ENCODE measurements at regions of chr21 and their contacts with region 1.

Region 1: GRCh38 chr21:32257962-32258785 is 20.7 kb downstream of the MIS18A start:
- DNase-seq: peak; percentile 82
- H3K4me3 ChIP-seq: no peak overlapping the region
- H3K27ac ChIP-seq: peak overlapping the region in 3 of 4 donors; percentile 34 to 73 (median 73)
- H3K4me1 ChIP-seq: peaks cover 0 to 40% (median 33%) of the 10 kb centered on the region in 4 donors
- H3K27me3 ChIP-seq: no peaks in the 10 kb centered on the region
- CTCF ChIP-seq: peak; percentile 65 to 86 (median 73)
- EP300 ChIP-seq: no peak
- POLR2A ChIP-seq: no peak

Region 2: DNA sequence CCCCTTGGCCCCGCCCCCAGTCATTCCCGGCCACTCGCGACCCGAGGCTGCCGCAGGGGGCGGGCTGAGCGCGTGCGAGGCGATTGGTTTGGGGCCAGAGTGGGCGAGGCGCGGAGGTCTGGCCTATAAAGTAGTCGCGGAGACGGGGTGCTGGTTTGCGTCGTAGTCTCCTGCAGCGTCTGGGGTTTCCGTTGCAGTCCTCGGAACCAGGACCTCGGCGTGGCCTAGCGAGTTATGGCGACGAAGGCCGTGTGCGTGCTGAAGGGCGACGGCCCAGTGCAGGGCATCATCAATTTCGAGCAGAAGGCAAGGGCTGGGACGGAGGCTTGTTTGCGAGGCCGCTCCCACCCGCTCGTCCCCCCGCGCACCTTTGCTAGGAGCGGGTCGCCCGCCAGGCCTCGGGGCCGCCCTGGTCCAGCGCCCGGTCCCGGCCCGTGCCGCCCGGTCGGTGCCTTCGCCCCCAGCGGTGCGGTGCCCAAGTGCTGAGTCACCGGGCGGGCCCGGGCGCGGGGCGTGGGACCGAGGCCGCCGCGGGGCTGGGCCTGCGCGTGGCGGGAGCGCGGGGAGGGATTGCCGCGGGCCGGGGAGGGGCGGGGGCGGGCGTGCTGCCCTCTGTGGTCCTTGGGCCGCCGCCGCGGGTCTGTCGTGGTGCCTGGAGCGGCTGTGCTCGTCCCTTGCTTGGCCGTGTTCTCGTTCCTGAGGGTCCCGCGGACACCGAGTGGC is 598.5 kb before region 1 on chr21 and contains the start of gene SOD1:
- intact Hi-C with region 1: loop called (anchors 10 kb)
- DNase-seq: peak; percentile 97
- H3K4me3 ChIP-seq: peak within 1 kb of the TSS; percentile 85 to 95 (median 90)
- H3K27ac ChIP-seq: peak within 1 kb of the TSS; percentile 93 to 96 (median 95)
- H3K4me1 ChIP-seq: peaks cover 0 to 42% (median 38%) of the 10 kb centered on the region in 4 donors
- H3K27me3 ChIP-seq: no peaks in the 10 kb centered on the region
- CTCF ChIP-seq: peak in 1 of 4 experiments; percentile 19
- EP300 ChIP-seq: no peak
- POLR2A ChIP-seq: peak; percentile 78 to 80
- total RNA-seq, gene SOD1: 169 to 279 (median 199) TPM

Region 3: DNA sequence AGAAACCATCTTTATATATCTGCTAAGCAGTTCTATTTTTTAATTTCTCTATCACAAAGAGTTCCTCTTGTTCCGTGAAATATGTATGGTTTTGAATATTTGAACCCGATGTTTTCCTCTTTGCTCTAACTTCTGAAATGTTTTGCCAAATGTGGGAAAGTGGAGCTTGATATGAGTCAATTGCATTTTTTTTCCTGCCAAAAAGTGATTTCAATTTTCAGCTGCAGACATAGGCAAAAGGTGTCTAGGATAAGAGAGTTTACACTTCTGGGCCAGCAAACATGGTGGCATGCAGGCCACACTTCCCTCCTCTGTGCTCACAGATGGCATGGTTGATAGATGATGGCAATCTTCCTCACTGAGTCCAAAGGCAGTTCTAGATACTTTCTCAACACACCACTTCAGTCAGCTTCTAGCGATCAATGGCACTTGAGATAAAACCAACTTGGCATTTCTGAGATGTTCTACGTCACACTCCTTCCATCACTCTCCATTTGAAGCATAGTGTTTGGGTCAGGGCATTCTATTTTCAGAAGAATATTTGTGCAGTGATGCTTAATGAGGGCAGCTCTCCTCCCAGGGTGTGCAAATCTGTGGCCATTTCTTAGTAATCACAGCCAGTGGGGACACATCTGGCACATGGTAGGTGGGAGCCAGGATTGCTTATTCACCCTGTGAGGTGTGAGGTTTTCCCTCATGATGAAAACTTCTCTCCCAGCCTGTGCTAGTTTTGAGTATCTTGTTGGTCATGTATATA is 471.8 kb before region 1 on chr21:
- intact Hi-C with region 1: loop called (anchors 2 kb)
- DNase-seq: no peak
- H3K4me3 ChIP-seq: no peak overlapping the region
- H3K27ac ChIP-seq: no peak overlapping the region
- H3K4me1 ChIP-seq: peaks cover 0 to 6% (median 5%) of the 10 kb centered on the region in 4 donors
- H3K27me3 ChIP-seq: no peaks in the 10 kb centered on the region
- CTCF ChIP-seq: no peak
- EP300 ChIP-seq: no peak
- POLR2A ChIP-seq: no peak

Region 4: DNA sequence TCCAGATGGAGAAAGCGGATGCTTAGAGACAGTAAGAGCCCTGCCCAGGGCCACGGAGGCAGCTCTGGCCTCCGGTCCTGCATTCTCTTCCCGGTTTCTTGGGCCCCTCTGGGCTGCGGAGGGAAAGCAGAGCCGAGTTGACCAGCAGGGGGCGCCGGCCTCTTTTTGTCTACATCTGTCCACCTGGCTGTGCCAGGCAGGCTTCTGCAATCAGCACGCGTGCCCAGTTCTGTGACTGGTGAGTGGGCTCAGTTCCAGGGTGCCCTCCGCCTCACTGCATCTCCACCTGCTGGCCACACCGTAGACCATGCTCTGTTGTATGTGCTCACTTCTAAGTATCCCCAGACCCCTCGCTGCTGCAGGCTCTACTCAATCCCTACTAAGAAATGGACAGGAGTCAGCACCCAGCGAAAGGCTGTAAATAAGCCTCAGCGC is 392.1 kb before region 1 on chr21:
- intact Hi-C with region 1: loop called (anchors 1 kb)
- DNase-seq: peak; percentile 89
- H3K4me3 ChIP-seq: no peak overlapping the region
- H3K27ac ChIP-seq: no peak overlapping the region
- H3K4me1 ChIP-seq: peaks cover 0 to 11% (median 3%) of the 10 kb centered on the region in 4 donors
- H3K27me3 ChIP-seq: no peaks in the 10 kb centered on the region
- CTCF ChIP-seq: peak; percentile 38 to 92 (median 78)
- EP300 ChIP-seq: no peak
- POLR2A ChIP-seq: no peak